ENCODE measurements at regions of chr1 and their contacts with region 1.

Region 1: GRCh38 chr1:58739856-58740466 is 40.1 kb upstream of the MYSM1 start:
- DNase-seq: peak; percentile 86
- H3K4me3 ChIP-seq: no peak overlapping the region
- H3K27ac ChIP-seq: no peak overlapping the region
- H3K4me1 ChIP-seq: 0 out of 2 replicates have a peak, but pooled peaks cover 4% of the 10 kb centered on the region
- H3K27me3 ChIP-seq: no peaks in the 10 kb centered on the region

Region 2: DNA sequence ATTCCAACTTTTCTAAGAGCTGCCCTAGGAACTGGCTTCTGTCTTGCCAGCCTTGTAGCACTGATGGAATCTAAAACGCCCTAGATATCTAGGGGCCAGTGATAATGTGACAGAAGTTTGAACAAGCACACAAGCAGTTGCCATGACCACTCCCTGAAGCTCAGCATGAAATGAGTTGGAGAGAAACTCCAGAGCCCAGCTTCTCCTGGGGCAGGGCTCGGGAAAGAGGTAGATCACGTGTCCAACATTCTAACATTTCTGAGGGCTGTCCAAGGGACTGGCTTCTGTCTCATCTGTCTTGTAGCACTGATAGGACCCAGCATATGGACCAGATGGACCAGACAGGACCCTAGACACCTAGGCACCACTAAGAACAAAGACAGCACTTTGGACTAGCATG is 231.3 kb before region 1 on chr1:
- in situ Hi-C with region 1: no loop called
- DNase-seq: no peak
- H3K4me3 ChIP-seq: no peak overlapping the region
- H3K27ac ChIP-seq: no peak overlapping the region
- H3K4me1 ChIP-seq: no peaks in the 10 kb centered on the region
- H3K27me3 ChIP-seq: no peaks in the 10 kb centered on the region

Region 3: GRCh38 chr1:59947047-59947938 is 1207.3 kb after region 1 on chr1:
- in situ Hi-C with region 1: loop called (anchors 25 kb)
- DNase-seq: peak; percentile 82
- H3K4me3 ChIP-seq: no peak overlapping the region
- H3K27ac ChIP-seq: no peak overlapping the region
- H3K4me1 ChIP-seq: no peaks in the 10 kb centered on the region
- H3K27me3 ChIP-seq: 0 out of 2 replicates have a peak, but pooled peaks cover 9% of the 10 kb centered on the region

Measured in GM23248 (cell line).